AG04450 (cell line): ENCODE measurements at regions of chr7 and their contacts with region 1.

Region 1: DNA sequence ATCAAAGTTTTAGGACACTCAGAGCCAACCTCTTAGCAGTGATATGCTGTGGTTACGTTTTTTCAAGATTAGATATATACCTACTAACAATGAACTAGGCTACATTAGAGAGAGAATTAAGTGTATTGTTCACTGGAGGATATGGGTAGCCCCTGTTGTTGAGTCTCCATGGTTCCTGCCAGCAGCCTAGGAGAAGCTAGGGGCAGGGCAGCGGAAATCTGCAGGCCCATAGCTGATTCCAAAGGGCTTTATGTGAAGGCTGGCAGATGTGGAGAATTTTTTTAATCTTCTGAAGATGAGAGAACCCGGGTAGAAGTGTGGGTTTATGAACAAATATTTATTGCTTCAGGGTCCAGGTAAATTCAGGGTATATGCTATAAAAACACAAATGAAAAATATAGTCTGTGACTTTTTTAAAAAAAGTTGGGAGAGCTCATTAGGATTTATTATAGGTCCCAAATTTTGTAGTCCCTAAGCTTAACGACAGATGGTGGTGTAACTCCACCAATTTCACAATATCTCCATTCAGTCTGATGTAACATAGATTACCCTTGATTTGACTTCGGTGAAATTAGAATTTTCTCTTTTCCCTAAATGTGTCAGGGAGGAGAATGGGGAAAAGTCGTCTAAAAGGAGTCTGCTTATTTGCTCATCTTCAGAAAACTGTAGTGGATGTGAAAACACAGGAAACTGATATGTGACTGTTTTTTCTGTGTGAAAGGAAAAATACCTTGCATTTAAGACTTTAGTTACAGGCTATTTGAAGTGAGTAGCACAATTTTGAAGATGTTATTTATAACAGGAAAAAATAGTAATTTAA is 163.0 kb upstream of the PPP1R3A start:
- DNase-seq: peak; percentile 34
- H3K4me3 ChIP-seq: no peak overlapping the region
- H3K27ac ChIP-seq: no peak overlapping the region
- H3K27me3 ChIP-seq: peaks cover 29% of the 10 kb centered on the region
- CTCF ChIP-seq: peak; percentile 61

Region 2: DNA sequence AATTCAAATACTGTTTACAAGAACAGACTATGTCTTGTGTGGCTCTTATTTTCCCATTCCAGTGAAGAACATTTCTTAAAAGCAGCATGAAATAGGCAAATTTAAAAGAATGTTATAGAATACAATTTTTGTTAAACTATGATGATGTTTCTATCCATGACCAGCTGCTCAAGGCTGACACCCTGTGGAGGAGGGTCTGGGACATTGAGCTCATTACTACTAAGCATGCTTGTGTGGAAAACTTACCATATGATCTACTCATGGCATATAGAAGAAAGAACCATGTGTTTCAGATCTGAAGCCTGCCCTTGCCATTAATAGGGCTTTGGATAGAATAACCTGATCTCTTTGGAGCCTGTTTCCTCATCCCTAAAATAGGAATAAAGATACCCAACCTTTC is 457.8 kb after region 1 on chr7:
- CTCF ChIA-PET with region 1: interaction called, 18 read pairs
- POLR2A ChIA-PET with region 1: no interaction called
- DNase-seq: no peak
- H3K4me3 ChIP-seq: no peak overlapping the region
- H3K27ac ChIP-seq: no peak overlapping the region
- H3K27me3 ChIP-seq: no peaks in the 10 kb centered on the region
- CTCF ChIP-seq: peak; percentile 68

Region 3: DNA sequence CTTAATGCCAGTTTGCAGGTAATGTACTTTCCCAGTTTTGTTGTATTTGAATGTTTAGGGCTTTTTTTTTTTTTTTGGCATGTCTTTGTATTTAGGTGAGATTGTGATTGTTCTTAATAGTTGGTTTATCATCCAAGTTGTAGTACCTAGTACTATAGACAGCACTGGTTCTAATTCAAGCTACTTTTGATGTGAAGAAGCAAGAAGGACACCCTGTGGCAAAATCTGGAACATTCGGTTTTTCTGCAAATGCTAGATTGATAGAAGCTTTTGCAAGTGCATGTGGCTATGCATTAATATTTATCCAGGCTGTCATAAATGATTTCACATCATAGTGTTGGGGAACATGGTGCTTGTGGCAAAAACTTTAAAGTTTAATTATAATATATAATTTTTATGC is 581.7 kb after region 1 on chr7:
- CTCF ChIA-PET with region 1: interaction called, 24 read pairs
- POLR2A ChIA-PET with region 1: no interaction called
- DNase-seq: peak; percentile 2
- H3K4me3 ChIP-seq: no peak overlapping the region
- H3K27ac ChIP-seq: no peak overlapping the region
- H3K27me3 ChIP-seq: no peaks in the 10 kb centered on the region
- CTCF ChIP-seq: peak; percentile 47